ENCODE measurements at regions of chr19 and their contacts with region 1.

Region 1: GRCh38 chr19:47243776-47244547 is 12.4 kb upstream of the CCDC9 start:
- DNase-seq: peak; percentile 95 to 99
- H3K4me3 ChIP-seq: peak overlapping the region; percentile 51
- H3K4me3 Mint-ChIP-seq: no peak overlapping the region
- H3K27ac Mint-ChIP-seq: no peak overlapping the region
- H3K4me1 ChIP-seq: peaks cover 14% of the 10 kb centered on the region
- H3K4me1 Mint-ChIP-seq: no peaks in the 10 kb centered on the region
- H3K27me3 ChIP-seq: no peaks in the 10 kb centered on the region
- H3K27me3 Mint-ChIP-seq: no peaks in the 10 kb centered on the region
- CTCF ChIP-seq: peak; percentile 98

Region 2: GRCh38 chr19:47019431-47020041 is 224.4 kb before region 1 on chr19 and contains the start of gene NPAS1:
- CTCF ChIA-PET with region 1: interaction called, 4 read pairs
- POLR2A ChIA-PET with region 1: no interaction called
- intact Hi-C with region 1: loop called (anchors 5 kb)
- DNase-seq: peak in 1 of 2 experiments; percentile 57
- H3K4me3 ChIP-seq: peak within 1 kb of the TSS; percentile 41
- H3K4me3 Mint-ChIP-seq: peak within 1 kb of the TSS; percentile 70
- H3K27ac Mint-ChIP-seq: no peak within 1 kb of the TSS
- H3K4me1 ChIP-seq: peaks cover 8% of the 10 kb centered on the region; the same call in 1 of the 2 replicates
- H3K4me1 Mint-ChIP-seq: no peaks in the 10 kb centered on the region
- H3K27me3 ChIP-seq: peaks cover 1% of the 10 kb centered on the region
- H3K27me3 Mint-ChIP-seq: peaks cover 7% of the 10 kb centered on the region
- CTCF ChIP-seq: no peak
- total RNA-seq, gene NPAS1: 1.8 and 2.8 TPM in 2 replicates

Region 3: GRCh38 chr19:47130591-47131227 is 113.3 kb before region 1 on chr19 and contains the start of gene SAE1:
- CTCF ChIA-PET with region 1: interaction called, 15 read pairs
- POLR2A ChIA-PET with region 1: interaction called, 12 read pairs
- intact Hi-C with region 1: loop called (anchors 5 kb)
- DNase-seq: peak; percentile 99
- H3K4me3 ChIP-seq: peak within 1 kb of the TSS; percentile 86
- H3K4me3 Mint-ChIP-seq: peak within 1 kb of the TSS; percentile 94
- H3K27ac Mint-ChIP-seq: peak within 1 kb of the TSS; percentile 98
- H3K4me1 ChIP-seq: peaks cover 37% of the 10 kb centered on the region
- H3K4me1 Mint-ChIP-seq: peaks cover 32% of the 10 kb centered on the region
- H3K27me3 ChIP-seq: no peaks in the 10 kb centered on the region
- H3K27me3 Mint-ChIP-seq: no peaks in the 10 kb centered on the region
- CTCF ChIP-seq: peak in 1 of 2 experiments; percentile 70
- total RNA-seq, gene SAE1: 238 and 251 TPM in 2 replicates

Region 4: GRCh38 chr19:47157431-47158321 is 86.3 kb before region 1 on chr19:
- CTCF ChIA-PET with region 1: interaction called, 5 read pairs
- POLR2A ChIA-PET with region 1: interaction called, 11 read pairs
- intact Hi-C with region 1: no loop called
- DNase-seq: peak; percentile 42 to 45
- H3K4me3 ChIP-seq: no peak overlapping the region
- H3K4me3 Mint-ChIP-seq: no peak overlapping the region
- H3K27ac Mint-ChIP-seq: peak overlapping the region; percentile 91
- H3K4me1 ChIP-seq: peaks cover 22% of the 10 kb centered on the region
- H3K4me1 Mint-ChIP-seq: peaks cover 28% of the 10 kb centered on the region
- H3K27me3 ChIP-seq: no peaks in the 10 kb centered on the region
- H3K27me3 Mint-ChIP-seq: no peaks in the 10 kb centered on the region
- CTCF ChIP-seq: no peak

Region 5: DNA sequence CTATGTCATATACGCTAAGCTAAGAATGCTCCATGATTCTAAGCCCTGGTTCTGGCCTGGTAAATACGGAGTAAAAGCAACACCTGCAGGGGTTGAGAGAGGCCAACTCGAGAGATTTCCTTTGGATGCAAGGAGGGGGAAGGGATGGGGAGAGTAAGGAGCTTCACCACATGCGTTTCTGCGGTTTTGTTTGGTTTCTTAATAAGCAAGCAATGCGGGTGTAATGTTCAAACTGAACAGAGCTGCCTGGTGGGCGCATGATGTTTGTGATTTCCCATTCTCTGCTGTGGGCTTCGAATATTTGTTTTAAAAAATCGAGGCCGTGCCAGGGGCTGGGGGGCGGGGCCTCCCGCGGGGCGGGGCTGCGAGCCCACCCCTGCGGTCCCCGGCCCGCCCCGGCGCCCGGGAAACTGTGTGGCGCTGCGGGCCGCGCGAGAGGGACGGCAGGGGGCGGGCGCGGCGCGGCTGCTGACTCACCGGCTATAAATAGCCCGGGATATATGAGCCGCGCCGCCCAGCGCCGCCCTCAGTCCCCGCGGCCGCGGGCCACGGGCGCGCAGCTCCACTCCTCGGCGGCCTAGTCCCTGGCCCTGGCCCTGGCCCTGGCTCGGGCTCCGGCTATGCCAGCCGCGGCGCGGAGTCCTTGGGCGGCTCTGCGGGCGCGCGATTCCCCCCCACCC is 18.1 kb before region 1 on chr19:
- CTCF ChIA-PET with region 1: interaction called, 64 read pairs
- POLR2A ChIA-PET with region 1: interaction called, 55 read pairs
- intact Hi-C with region 1: loop called (anchors 1 kb)
- DNase-seq: peak; percentile 82 to 94
- H3K4me3 ChIP-seq: peak overlapping the region; percentile 61
- H3K4me3 Mint-ChIP-seq: no peak overlapping the region
- H3K27ac Mint-ChIP-seq: peak overlapping the region; percentile 81
- H3K4me1 ChIP-seq: peaks cover 32% of the 10 kb centered on the region
- H3K4me1 Mint-ChIP-seq: peaks cover 6% of the 10 kb centered on the region
- H3K27me3 ChIP-seq: no peaks in the 10 kb centered on the region
- H3K27me3 Mint-ChIP-seq: no peaks in the 10 kb centered on the region
- CTCF ChIP-seq: peak in 1 of 2 experiments; percentile 47

Region 6: GRCh38 chr19:47256688-47257443 is 12.9 kb after region 1 on chr19:
- CTCF ChIA-PET with region 1: interaction called, 64 read pairs
- POLR2A ChIA-PET with region 1: interaction called, 42 read pairs
- intact Hi-C with region 1: no loop called
- DNase-seq: peak; percentile 100
- H3K4me3 ChIP-seq: peak overlapping the region; percentile 76
- H3K4me3 Mint-ChIP-seq: peak overlapping the region; percentile 92
- H3K27ac Mint-ChIP-seq: peak overlapping the region; percentile 96
- H3K4me1 ChIP-seq: peaks cover 22% of the 10 kb centered on the region
- H3K4me1 Mint-ChIP-seq: peaks cover 14% of the 10 kb centered on the region
- H3K27me3 ChIP-seq: no peaks in the 10 kb centered on the region
- H3K27me3 Mint-ChIP-seq: no peaks in the 10 kb centered on the region
- CTCF ChIP-seq: no peak

Region 7: DNA sequence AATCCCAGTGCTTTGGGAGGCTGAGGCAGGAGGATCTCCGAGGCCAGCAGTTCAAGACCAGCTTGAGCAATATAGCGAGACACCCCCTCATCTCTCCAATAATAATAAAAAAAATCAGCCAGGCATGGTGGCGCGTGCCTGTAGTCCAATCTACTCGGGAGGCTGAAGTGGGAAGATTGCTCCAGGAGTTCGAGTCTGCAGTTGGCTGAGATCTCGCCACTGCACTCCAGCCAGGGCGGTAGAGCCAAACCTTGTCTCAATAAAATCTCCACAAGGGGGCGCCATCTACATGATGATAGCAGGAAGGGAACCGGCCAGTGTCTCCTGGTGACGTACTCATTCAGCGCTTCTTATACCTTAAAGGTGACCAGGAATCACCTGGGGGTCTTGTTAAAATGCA is 52.1 kb after region 1 on chr19:
- CTCF ChIA-PET with region 1: no interaction called
- POLR2A ChIA-PET with region 1: no interaction called
- intact Hi-C with region 1: no loop called
- DNase-seq: peak; percentile 89 to 92
- H3K4me3 ChIP-seq: no peak overlapping the region
- H3K4me3 Mint-ChIP-seq: no peak overlapping the region
- H3K27ac Mint-ChIP-seq: peak overlapping the region; percentile 64
- H3K4me1 ChIP-seq: no peaks in the 10 kb centered on the region
- H3K4me1 Mint-ChIP-seq: peaks cover 7% of the 10 kb centered on the region
- H3K27me3 ChIP-seq: no peaks in the 10 kb centered on the region
- H3K27me3 Mint-ChIP-seq: no peaks in the 10 kb centered on the region
- CTCF ChIP-seq: peak; percentile 78 to 89

Region 8: GRCh38 chr19:47348819-47349795 is 105.1 kb after region 1 on chr19 and contains the start of gene DHX34:
- CTCF ChIA-PET with region 1: interaction called, 11 read pairs
- POLR2A ChIA-PET with region 1: interaction called, 3 read pairs
- intact Hi-C with region 1: no loop called
- DNase-seq: peak; percentile 99
- H3K4me3 ChIP-seq: peak within 1 kb of the TSS; percentile 86
- H3K4me3 Mint-ChIP-seq: peak within 1 kb of the TSS; percentile 95
- H3K27ac Mint-ChIP-seq: peak within 1 kb of the TSS; percentile 88
- H3K4me1 ChIP-seq: no peaks in the 10 kb centered on the region
- H3K4me1 Mint-ChIP-seq: peaks cover 27% of the 10 kb centered on the region
- H3K27me3 ChIP-seq: no peaks in the 10 kb centered on the region
- H3K27me3 Mint-ChIP-seq: no peaks in the 10 kb centered on the region
- CTCF ChIP-seq: peak; percentile 97 to 98
- total RNA-seq, gene DHX34: 28.7 TPM in 2 replicates

Measured in Caco-2 (cell line).